Common myeloid progenitor, CD34-positive (primary cell): ENCODE measurements at regions of chr1 and their contacts with region 1.

Region 1: DNA sequence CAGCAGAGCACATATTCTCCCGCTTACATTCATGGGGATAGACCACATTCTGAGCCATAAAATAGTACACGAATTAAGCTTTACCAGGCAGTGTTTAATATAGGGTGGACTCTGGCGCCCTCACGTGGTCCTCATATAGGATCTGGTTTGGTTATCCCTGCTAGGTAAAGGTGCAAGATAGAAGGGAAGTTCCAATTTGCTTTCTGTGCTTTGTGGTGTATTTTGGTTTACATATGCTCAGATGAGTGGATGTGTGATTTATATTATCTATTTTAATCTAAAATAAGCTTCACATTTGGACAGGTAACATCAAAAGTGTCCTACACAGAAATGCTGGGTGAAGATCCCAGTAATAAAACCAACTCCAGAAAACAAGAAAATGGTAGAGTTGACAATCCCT is 3.6 kb downstream of the CR1 start:
- DNase-seq: peak; percentile 80 to 91 (median 86)
- H3K4me3 ChIP-seq: no peak overlapping the region
- H3K27ac ChIP-seq: no peak overlapping the region
- H3K4me1 ChIP-seq: peaks cover 4 to 16% (median 9%) of the 10 kb centered on the region in 4 experiments
- H3K27me3 ChIP-seq: peaks cover 0 to 8% (median 0%) of the 10 kb centered on the region in 5 experiments

Region 2: DNA sequence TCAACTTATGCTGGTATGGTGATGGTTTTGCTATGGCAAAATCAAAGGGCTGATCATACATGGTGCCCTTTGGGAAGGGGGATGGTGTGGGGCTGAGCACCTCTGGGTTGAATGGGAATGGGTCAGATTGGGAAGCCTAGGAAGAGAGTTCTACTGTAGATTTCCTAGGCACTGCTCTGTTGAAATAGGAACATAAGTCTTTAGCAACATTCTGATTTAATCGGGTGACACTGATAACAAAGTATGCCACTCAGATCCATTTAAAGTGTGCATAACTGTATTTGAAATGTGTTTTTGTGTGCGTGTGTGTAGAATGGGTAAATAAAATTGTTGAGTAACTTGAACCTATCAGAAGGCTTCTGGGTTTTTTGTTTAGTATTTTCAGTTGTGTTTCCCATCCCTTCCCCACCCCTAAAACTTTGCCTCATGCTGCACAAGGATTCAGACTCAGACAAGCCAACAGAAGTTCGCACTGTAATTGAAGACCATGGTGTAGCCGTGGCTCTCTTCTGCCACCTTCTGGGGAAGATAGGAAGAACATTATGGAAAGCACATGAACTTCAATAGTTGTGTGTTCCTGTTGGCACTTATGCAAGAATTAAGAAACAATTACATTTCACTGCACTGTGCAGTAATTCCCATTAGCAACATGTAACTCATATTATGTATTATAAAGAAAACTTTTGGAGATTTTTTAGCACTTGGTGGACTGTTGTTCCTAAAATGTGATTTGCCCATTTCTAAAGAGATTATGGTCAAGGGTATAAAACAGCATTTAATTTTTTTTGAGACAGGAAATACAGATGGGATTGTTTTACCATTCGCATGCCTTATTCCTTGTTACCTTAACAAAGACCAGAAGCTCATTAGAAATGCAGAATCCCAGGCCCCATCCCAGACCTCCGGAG is 421.8 kb before region 1 on chr1:
- CTCF ChIA-PET with region 1: interaction called, 25 read pairs
- POLR2A ChIA-PET with region 1: no interaction called
- DNase-seq: peak; percentile 77 to 90 (median 83)
- H3K4me3 ChIP-seq: no peak overlapping the region
- H3K27ac ChIP-seq: no peak overlapping the region
- H3K4me1 ChIP-seq: peaks cover under 1 to 4% (median 2%) of the 10 kb centered on the region in 4 experiments
- H3K27me3 ChIP-seq: no peaks in the 10 kb centered on the region

Region 3: GRCh38 chr1:207084701-207085180 is 414.8 kb before region 1 on chr1:
- CTCF ChIA-PET with region 1: interaction called, 25 read pairs
- POLR2A ChIA-PET with region 1: no interaction called
- DNase-seq: peak; percentile 78 to 84 (median 83)
- H3K4me3 ChIP-seq: no peak overlapping the region
- H3K27ac ChIP-seq: no peak overlapping the region
- H3K4me1 ChIP-seq: peaks cover 0 to 26% (median 12%) of the 10 kb centered on the region in 4 experiments
- H3K27me3 ChIP-seq: no peaks in the 10 kb centered on the region

Region 4: GRCh38 chr1:207321079-207321789 is 178.3 kb before region 1 on chr1 and contains the start of gene CD55:
- CTCF ChIA-PET with region 1: interaction called, 13 read pairs
- POLR2A ChIA-PET with region 1: no interaction called
- DNase-seq: peak; percentile 100
- H3K4me3 ChIP-seq: peak within 1 kb of the TSS; percentile 74 to 100 (median 92)
- H3K27ac ChIP-seq: peak within 1 kb of the TSS; percentile 95 to 97
- H3K4me1 ChIP-seq: peaks cover 21 to 49% (median 27%) of the 10 kb centered on the region in 4 experiments
- H3K27me3 ChIP-seq: no peaks in the 10 kb centered on the region

Region 5: DNA sequence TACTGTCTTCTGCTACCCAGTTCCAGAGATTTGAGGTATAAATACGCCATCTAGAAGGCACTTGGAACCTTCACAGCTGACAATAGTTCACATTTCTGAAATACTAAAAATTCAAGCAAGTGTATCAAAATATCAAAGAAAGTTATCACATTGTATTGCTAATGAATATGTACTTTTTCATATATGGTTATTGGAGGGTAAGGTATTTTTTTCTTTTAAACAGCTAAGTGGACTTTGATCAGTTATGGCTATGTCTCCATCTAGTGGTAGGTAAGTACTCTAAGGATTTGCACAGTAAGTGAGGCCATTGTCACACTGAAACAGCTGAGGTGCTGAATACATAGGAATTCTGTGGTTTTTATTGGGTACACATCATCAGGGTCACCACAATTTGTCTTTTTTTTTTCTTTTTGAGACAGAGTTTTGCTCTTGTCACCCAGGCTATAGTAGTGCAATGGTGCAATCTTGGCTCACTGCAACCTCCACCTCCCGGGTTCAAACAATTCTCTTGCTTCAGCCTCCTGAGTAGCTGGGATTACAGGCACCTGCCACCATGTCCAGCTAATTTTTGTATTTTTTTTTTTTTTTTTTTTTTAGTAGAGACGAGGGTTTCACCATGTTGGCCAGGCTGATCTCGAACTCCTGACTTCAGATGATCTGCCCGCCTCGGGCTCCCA is 94.6 kb before region 1 on chr1:
- CTCF ChIA-PET with region 1: interaction called, 12 read pairs
- POLR2A ChIA-PET with region 1: interaction called, 4 read pairs
- DNase-seq: peak; percentile 70 to 84 (median 81)
- H3K4me3 ChIP-seq: no peak overlapping the region
- H3K27ac ChIP-seq: no peak overlapping the region
- H3K4me1 ChIP-seq: peaks cover 0 to 6% (median 1%) of the 10 kb centered on the region in 4 experiments
- H3K27me3 ChIP-seq: no peaks in the 10 kb centered on the region

Region 6: GRCh38 chr1:207444514-207445217 is 54.9 kb before region 1 on chr1:
- CTCF ChIA-PET with region 1: no interaction called
- POLR2A ChIA-PET with region 1: no interaction called
- DNase-seq: no peak
- H3K4me3 ChIP-seq: no peak overlapping the region
- H3K27ac ChIP-seq: no peak overlapping the region
- H3K4me1 ChIP-seq: no peaks in the 10 kb centered on the region
- H3K27me3 ChIP-seq: no peaks in the 10 kb centered on the region